ENCODE measurements at regions of chr17 and their contacts with region 1.

Region 1: DNA sequence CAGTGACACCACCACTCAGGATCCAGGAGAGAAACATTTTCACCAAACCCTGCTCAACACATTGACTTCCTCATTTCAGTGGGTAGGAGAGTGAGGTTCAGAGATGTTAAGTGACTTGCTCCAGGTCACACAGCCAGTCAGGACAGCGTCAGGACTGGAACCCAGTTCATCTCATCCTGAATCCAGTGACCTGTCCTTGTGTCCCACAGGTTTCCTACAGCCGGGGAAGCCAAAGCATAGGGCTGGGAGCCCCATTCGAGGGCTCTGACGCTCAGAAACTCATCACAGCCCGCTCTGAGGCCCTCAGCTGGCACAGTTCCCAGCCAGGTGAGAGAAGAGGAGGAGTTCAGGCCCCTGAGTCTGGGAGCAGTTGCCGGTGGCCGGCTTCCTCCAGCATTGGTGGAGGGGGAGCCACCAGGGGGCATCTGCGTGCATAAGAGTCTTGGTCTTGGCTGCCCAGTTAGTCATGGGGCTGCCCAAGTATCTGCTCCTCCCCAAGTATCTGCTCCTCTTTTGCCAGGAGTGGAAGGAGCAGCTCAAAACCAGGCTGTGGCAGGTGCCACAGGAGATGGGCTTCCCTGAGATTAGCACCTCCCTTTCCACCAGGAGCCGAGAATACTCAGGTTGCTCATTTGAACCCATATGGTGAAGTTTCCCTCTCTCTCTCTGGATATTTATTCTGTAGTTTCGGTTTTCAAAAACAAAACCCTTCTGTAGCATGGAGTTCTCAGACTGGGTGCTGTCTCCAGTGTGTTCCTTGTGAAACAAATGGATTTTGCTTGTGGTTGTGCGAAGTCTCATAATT is 56.0 kb downstream of the TNFRSF13B start:
- DNase-seq: peak; percentile 76
- H3K4me3 Mint-ChIP-seq: no peak overlapping the region
- H3K27ac Mint-ChIP-seq: no peak overlapping the region
- H3K4me1 Mint-ChIP-seq: no peaks in the 10 kb centered on the region
- H3K27me3 Mint-ChIP-seq: no peaks in the 10 kb centered on the region
- CTCF ChIP-seq: peak; percentile 41

Region 2: GRCh38 chr17:16991349-16992009 is 75.5 kb after region 1 on chr17:
- CTCF ChIA-PET with region 1: interaction called, 3 read pairs
- POLR2A ChIA-PET with region 1: no interaction called
- intact Hi-C with region 1: loop called (anchors 5 kb)
- DNase-seq: peak; percentile 71
- H3K4me3 Mint-ChIP-seq: no peak overlapping the region
- H3K27ac Mint-ChIP-seq: no peak overlapping the region
- H3K4me1 Mint-ChIP-seq: peaks cover 5% of the 10 kb centered on the region
- H3K27me3 Mint-ChIP-seq: no peaks in the 10 kb centered on the region
- CTCF ChIP-seq: peak; percentile 73